GM10248 (cell line): ENCODE measurements at regions of chr19 and their contacts with region 1.

Region 1: DNA sequence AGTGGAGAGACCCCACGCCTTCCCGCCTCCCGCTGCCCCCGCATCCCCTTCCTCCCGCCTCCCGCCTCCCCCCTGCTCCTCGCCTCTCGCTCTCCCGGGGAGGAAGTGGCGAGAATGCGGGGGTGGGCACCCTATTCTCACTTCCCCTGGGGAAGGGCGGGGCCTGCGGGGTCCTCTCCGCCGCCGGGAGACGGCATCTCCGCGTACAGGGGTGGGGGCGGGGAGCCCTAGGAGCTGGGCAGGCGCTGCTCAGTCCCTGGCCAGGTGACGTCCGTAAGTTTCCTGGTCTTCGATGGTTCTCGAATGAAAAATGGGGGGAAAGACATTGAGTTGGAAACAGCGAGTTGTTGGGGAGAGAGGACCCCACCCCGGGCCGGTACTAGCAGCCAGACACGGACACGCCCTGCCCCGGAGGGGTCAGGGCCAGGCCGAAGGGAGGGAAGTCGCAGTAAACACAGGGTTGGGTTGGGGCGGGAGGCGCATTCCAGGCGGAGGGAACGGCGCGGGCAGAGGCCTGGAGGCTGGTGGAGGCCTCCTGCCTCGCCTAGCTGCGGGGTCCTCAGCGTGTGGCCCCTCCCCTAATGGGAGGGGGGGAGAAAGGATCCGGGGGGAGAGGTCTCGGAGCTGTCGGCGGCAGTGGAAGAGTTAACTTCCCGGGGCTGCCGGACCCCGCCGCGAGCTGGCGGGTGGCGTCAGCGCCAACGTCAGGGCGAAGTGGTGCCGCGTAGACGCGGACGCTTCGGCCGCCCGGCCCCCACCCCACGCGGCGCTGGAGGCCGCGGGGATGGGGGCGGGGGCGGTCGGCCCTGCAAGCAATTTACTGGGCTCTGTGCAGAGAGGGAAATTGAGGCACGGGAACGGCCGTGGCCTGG is 10.4 kb upstream of the JUND start:
- DNase-seq: peak; percentile 91
- CTCF ChIP-seq: no peak

Region 2: DNA sequence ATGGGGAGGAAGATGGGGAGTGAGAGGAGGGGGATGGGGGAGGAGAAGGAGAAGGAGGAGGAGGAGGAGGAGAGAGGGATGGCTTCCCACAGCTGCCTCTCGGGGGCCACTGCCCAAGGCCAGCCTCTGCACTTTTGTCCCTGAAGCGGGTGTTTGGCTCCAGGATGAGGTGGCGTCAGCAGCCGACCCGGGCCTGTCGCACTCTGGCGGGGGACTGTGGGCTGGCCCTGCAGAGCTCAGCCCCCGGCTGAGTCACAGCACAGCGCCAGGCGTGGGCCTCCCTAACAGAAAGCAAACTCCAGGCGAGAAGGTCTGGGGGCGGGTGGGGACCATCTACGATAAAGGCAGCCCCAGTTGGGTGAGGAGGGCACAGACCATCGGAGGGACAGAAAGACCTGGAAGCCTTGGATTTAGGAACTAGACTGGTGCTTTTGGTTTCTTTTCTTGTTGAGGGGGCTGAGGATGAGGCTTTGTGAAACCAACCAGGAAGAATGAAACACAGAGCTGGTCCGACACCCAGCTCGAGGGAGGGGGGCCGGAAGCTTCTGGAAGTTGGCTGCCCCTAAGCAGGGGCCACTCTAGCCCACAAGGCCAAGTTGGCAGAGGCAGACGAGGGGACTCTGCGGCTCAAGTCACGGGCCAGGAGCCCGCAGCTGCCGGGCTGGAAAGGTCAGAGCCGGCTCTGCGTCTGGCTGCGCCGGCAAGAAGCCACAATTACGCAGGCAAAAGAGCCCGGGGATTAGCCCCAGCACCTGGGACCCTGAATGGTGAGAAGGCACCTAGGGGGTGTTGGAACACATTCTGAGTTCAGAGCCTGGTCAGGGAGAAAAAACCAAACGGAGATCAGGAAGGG is 12.9 kb after region 1 on chr19:
- CTCF ChIA-PET with region 1: interaction called, 20 read pairs
- POLR2A ChIA-PET with region 1: interaction called, 11 read pairs
- DNase-seq: peak; percentile 89
- CTCF ChIP-seq: no peak